Naive thymus-derived CD4-positive, alpha-beta T cell (primary cell): ENCODE measurements at regions of chr12 and their contacts with region 1.

Region 1: DNA sequence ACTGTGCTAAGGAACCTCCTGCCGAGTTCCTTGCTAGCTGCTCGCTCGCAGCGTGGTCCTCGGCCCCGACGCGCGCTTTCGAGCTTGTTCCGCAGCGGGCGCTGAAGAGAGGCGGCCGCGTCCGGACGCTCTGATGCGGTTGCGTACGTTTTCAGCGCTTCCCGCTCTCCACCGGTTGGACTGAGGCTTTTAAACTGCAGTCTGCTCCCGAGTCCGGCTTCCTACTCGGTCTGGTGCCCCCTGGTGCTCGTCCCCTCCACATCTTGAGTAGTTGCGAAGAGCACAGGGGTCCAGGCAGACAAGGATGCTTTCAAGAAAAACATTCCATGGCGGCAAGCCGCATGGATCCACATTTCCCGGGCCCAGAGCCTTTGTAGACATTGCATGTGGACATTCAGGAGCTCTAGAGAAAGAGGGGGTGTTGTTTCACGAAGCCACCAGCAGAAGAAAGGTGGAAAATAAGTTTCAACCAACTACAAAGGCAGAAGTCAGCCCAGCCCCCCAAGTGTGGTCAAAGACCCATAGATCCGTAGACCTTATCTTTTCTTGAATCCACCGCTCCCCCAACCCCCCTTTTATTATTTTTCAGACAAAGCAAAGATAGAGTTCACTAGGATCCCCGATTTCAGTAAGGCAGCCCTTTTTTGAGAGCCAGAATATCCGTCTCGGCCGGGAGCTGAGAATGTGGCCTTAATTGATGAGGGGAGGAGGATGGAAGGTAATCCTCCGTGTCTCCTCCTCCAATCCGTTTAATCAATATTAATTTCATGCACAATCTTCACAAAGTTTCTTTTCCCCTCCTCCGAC is 984 bp upstream of the WNK1 start:
- DNase-seq: peak; percentile 52 to 84 (median 75)
- ATAC-seq: peak; percentile 46
- H3K4me3 ChIP-seq: peak overlapping the region; percentile 71
- H3K4me3 Mint-ChIP-seq: no peak overlapping the region
- H3K27ac ChIP-seq: peak overlapping the region; percentile 98
- H3K27ac Mint-ChIP-seq: no peak overlapping the region
- H3K4me1 ChIP-seq: peaks cover 18 to 29% of the 10 kb centered on the region in 2 donors
- H3K4me1 Mint-ChIP-seq: peaks cover 12 to 21% (median 15%) of the 10 kb centered on the region in 7 donors
- H3K27me3 ChIP-seq: no peaks in the 10 kb centered on the region
- H3K27me3 Mint-ChIP-seq: no peaks in the 10 kb centered on the region

Region 2: GRCh38 chr12:563250-563781 is 188.1 kb before region 1 on chr12:
- CTCF ChIA-PET with region 1: interaction called, 11 read pairs
- POLR2A ChIA-PET with region 1: interaction called, 14 read pairs
- intact Hi-C with region 1: loop called in 1 of 2 experiments (anchors 2 kb)
- DNase-seq: peak in 8 of 9 donors; percentile 54 to 89 (median 85)
- ATAC-seq: peak; percentile 91
- H3K4me3 ChIP-seq: peak overlapping the region; percentile 49
- H3K4me3 Mint-ChIP-seq: peak overlapping the region; percentile 73 to 98 (median 85)
- H3K27ac ChIP-seq: peak overlapping the region; percentile 80
- H3K27ac Mint-ChIP-seq: peak overlapping the region; percentile 84 to 96 (median 94)
- H3K4me1 ChIP-seq: peaks cover 49 to 71% of the 10 kb centered on the region in 2 donors
- H3K4me1 Mint-ChIP-seq: peaks cover 60 to 98% (median 92%) of the 10 kb centered on the region in 7 donors
- H3K27me3 ChIP-seq: no peaks in the 10 kb centered on the region
- H3K27me3 Mint-ChIP-seq: no peaks in the 10 kb centered on the region

Region 3: DNA sequence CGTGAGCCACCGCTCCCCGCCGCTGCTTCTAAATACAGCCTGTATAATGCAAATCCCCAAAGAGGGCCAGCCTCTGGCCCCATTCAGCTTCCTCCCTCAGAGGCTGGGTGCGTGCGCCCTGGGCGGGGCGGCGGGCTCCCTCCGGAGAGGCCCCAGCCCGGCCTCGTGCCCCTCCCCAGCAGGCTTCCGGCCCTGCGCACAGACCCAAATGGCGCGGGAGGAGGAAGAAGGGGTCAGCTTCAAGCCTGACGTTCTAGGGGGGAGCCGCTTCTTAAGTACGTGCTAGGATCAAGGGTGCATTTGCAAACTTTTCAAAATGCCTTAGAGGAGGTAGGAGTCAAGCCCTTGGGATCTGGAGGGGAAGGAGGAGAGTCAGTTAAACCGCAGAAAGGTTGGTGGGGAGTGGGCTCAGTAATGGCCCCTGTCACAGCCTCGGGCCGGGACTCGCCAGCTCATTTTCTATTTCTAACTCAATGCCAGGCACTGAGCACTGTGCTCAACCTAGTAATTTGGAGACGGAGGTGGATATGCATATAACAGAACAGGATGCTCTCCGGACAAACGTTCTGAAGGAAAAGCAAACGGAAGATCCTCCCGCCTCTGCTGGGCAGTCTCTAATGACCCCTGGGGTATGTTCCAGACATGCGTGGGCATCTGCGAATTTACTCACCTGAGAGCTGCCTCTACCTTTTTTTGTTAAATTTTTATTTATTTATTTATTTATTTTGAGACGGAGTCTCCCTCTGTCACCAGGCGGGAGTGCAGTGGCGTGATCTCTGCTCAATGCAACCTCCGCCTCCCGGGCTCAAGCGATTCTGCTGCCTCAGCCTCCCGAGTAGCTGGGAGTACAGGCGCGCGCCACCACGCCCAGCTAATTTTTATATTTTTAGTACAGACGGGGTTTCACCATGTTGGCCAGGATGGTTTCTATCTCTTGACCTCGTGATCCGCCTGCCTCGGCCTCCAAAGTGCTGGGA is 120.5 kb before region 1 on chr12:
- CTCF ChIA-PET with region 1: no interaction called
- POLR2A ChIA-PET with region 1: no interaction called
- intact Hi-C with region 1: loop called in 1 of 2 experiments (anchors 1 kb)
- DNase-seq: peak in 6 of 9 donors; percentile 54 to 88 (median 70)
- ATAC-seq: no peak
- H3K4me3 ChIP-seq: peak overlapping the region; percentile 53
- H3K4me3 Mint-ChIP-seq: peak overlapping the region in 8 of 10 donors; percentile 82 to 96 (median 91)
- H3K27ac ChIP-seq: peak overlapping the region; percentile 72
- H3K27ac Mint-ChIP-seq: peak overlapping the region in 7 of 9 donors; percentile 93 to 98 (median 95)
- H3K4me1 ChIP-seq: peaks cover 0 to 6% of the 10 kb centered on the region in 2 donors
- H3K4me1 Mint-ChIP-seq: peaks cover 7 to 47% (median 34%) of the 10 kb centered on the region in 7 donors
- H3K27me3 ChIP-seq: no peaks in the 10 kb centered on the region
- H3K27me3 Mint-ChIP-seq: no peaks in the 10 kb centered on the region

Region 4: DNA sequence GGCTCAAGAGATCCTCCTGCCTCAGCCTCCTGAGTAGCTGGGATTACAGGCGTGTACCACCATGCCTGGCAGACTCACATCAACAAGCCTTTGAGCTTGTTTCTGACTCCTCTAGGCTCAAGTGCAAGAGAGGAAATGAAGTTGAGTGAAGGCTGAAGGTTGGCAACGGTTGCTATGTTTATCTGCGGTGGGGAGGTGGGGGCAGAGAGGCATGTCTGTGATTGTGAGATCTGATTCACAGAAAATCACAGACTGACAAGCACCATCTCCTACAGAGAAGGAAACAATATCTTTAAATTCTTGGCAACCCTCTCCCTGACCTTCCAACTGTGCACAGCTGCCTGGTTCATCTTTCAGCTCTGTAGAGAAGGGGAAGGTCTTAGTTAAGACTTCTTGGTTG is 66.0 kb before region 1 on chr12:
- CTCF ChIA-PET with region 1: interaction called, 18 read pairs
- POLR2A ChIA-PET with region 1: interaction called, 30 read pairs
- intact Hi-C with region 1: loop called (anchors 1 kb)
- DNase-seq: peak; percentile 48 to 96 (median 94)
- ATAC-seq: peak; percentile 96
- H3K4me3 ChIP-seq: no peak overlapping the region
- H3K4me3 Mint-ChIP-seq: peak overlapping the region; percentile 30 to 78 (median 72)
- H3K27ac ChIP-seq: peak overlapping the region; percentile 81
- H3K27ac Mint-ChIP-seq: peak overlapping the region; percentile 90 to 99 (median 98)
- H3K4me1 ChIP-seq: peaks cover 23 to 31% of the 10 kb centered on the region in 2 donors
- H3K4me1 Mint-ChIP-seq: peaks cover 23 to 53% (median 48%) of the 10 kb centered on the region in 7 donors
- H3K27me3 ChIP-seq: no peaks in the 10 kb centered on the region
- H3K27me3 Mint-ChIP-seq: no peaks in the 10 kb centered on the region

Region 5: GRCh38 chr12:737122-737739 is 14.2 kb before region 1 on chr12:
- CTCF ChIA-PET with region 1: interaction called, 12 read pairs
- POLR2A ChIA-PET with region 1: interaction called, 153 read pairs
- intact Hi-C with region 1: no loop called
- DNase-seq: no peak
- ATAC-seq: no peak
- H3K4me3 ChIP-seq: no peak overlapping the region
- H3K4me3 Mint-ChIP-seq: no peak overlapping the region
- H3K27ac ChIP-seq: no peak overlapping the region
- H3K27ac Mint-ChIP-seq: no peak overlapping the region
- H3K4me1 ChIP-seq: no peaks in the 10 kb centered on the region
- H3K4me1 Mint-ChIP-seq: peaks cover 0 to 7% (median 6%) of the 10 kb centered on the region in 7 donors
- H3K27me3 ChIP-seq: no peaks in the 10 kb centered on the region
- H3K27me3 Mint-ChIP-seq: no peaks in the 10 kb centered on the region

Region 6: GRCh38 chr12:949453-950191 is 198.2 kb after region 1 on chr12 and contains the start of gene RAD52:
- CTCF ChIA-PET with region 1: interaction called, 6 read pairs
- POLR2A ChIA-PET with region 1: interaction called, 3 read pairs
- intact Hi-C with region 1: loop called (anchors 1 kb)
- DNase-seq: peak; percentile 94 to 99 (median 97)
- ATAC-seq: peak; percentile 96
- H3K4me3 ChIP-seq: peak within 1 kb of the TSS; percentile 83
- H3K4me3 Mint-ChIP-seq: peak within 1 kb of the TSS; percentile 90 to 98 (median 94)
- H3K27ac ChIP-seq: peak within 1 kb of the TSS; percentile 78
- H3K27ac Mint-ChIP-seq: peak within 1 kb of the TSS; percentile 88 to 98 (median 93)
- H3K4me1 ChIP-seq: peaks cover 0 to 3% of the 10 kb centered on the region in 2 donors
- H3K4me1 Mint-ChIP-seq: peaks cover 20 to 34% (median 30%) of the 10 kb centered on the region in 7 donors
- H3K27me3 ChIP-seq: no peaks in the 10 kb centered on the region
- H3K27me3 Mint-ChIP-seq: peaks cover 0 to 4% (median 0%) of the 10 kb centered on the region in 5 donors
- total RNA-seq, gene RAD52: 11.0 to 34.9 (median 18.3) TPM